ENCODE measurements at regions of chr2 and their contacts with region 1.

Region 1: DNA sequence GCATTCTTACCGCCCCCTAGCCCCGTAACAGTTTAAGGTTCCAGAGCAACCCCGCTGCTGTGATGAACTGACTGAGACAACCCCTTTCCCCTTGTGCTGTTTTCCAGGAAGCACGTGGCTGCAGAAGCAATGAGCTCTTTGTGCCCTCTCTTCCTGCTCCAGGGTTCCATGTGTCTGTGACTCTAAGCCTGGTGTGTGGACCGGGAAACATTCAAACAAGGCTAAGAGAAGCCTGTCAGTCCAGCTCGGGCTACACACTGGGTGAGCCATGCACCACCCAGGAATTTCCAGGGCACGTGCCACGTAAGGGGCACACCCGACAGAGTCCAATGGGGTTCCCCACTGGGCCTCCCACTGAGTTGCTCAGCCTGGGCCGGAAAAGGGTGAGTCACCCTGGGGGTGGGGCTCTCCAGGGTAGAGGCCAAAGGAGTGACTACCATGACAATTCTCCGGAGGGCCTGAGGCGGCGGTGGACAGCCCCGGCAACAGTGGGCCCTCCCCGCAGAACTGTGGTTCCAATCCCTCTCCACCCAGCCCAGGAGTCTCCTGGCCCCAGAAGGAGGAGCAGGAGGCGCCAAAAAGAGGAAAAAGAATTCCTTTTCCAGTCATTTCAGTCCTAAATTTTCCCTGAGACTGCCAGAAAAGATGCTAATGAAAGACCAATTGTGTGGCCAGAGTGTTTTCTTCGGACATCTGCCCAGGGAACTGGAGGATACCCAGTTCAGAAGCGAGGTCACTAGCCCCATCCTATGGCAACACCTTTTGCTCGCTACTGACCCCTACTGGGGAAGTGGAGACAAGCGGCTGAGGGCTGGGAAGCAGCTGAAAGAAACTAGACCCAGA is 157.8 kb upstream of the SLC1A4 start:
- DNase-seq: peak in 1 of 2 experiments; percentile 94
- H3K4me3 ChIP-seq: no peak overlapping the region
- H3K27ac ChIP-seq: no peak overlapping the region
- H3K4me1 ChIP-seq: peaks cover 0 to 5% (median 3%) of the 10 kb centered on the region in 4 experiments; a peak in 3 of 7 replicates
- H3K27me3 ChIP-seq: no peaks in the 10 kb centered on the region
- CTCF ChIP-seq: peak; percentile 83 to 98 (median 92)
- EP300 ChIP-seq: no peak
- POLR2A ChIP-seq: no peak
- RAD21 ChIP-seq: peak; percentile 63 to 72

Region 2: GRCh38 chr2:64727013-64727767 is 104.2 kb before region 1 on chr2:
- CTCF ChIA-PET with region 1: interaction called, 12 read pairs
- POLR2A ChIA-PET with region 1: no interaction called
- DNase-seq: no peak
- H3K4me3 ChIP-seq: no peak overlapping the region
- H3K27ac ChIP-seq: no peak overlapping the region
- H3K4me1 ChIP-seq: peaks cover 0 to 8% (median 2%) of the 10 kb centered on the region in 4 experiments; a peak in 4 of 7 replicates
- H3K27me3 ChIP-seq: no peaks in the 10 kb centered on the region
- CTCF ChIP-seq: no peak
- EP300 ChIP-seq: no peak
- POLR2A ChIP-seq: no peak
- RAD21 ChIP-seq: no peak

Region 3: GRCh38 chr2:64793701-64794100 is 37.7 kb before region 1 on chr2:
- CTCF ChIA-PET with region 1: interaction called, 12 read pairs
- POLR2A ChIA-PET with region 1: interaction called, 3 read pairs
- DNase-seq: no peak
- H3K4me3 ChIP-seq: no peak overlapping the region
- H3K27ac ChIP-seq: no peak overlapping the region
- H3K4me1 ChIP-seq: peaks cover 0 to 8% (median 0%) of the 10 kb centered on the region in 4 experiments; a peak in 1 of 7 replicates
- H3K27me3 ChIP-seq: no peaks in the 10 kb centered on the region; a peak in 2 of 7 replicates
- CTCF ChIP-seq: no peak
- EP300 ChIP-seq: no peak
- POLR2A ChIP-seq: no peak
- RAD21 ChIP-seq: no peak

Region 4: DNA sequence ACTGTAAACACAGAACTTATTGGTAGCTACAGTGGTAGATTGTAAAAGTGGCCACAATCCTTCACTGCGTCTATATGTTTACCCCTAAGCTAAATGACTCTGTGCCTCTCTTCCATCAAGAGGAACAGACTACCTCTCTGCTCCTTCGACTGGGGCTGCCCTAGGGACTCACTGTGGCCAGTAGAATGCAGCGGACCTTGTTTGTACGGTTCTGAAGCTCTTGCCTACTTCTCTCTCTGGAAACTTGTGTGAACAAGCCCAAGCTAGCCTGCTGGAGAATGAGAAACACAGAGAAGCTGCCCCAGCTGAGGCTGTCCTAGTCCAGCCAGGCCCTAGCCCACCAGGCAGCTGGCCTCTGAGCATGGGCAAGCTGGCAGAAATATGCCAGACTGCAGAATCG is 17.0 kb after region 1 on chr2:
- CTCF ChIA-PET with region 1: interaction called, 25 read pairs
- POLR2A ChIA-PET with region 1: no interaction called
- DNase-seq: no peak
- H3K4me3 ChIP-seq: no peak overlapping the region
- H3K27ac ChIP-seq: no peak overlapping the region
- H3K4me1 ChIP-seq: peaks cover 0 to 4% (median 1%) of the 10 kb centered on the region in 4 experiments; a peak in 1 of 7 replicates
- H3K27me3 ChIP-seq: peaks cover 0 to 2% (median 0%) of the 10 kb centered on the region in 4 experiments; a peak in 1 of 7 replicates
- CTCF ChIP-seq: no peak
- EP300 ChIP-seq: no peak
- POLR2A ChIP-seq: no peak
- RAD21 ChIP-seq: no peak

Region 5: GRCh38 chr2:64865073-64865830 is 33.9 kb after region 1 on chr2:
- CTCF ChIA-PET with region 1: interaction called, 14 read pairs
- POLR2A ChIA-PET with region 1: interaction called, 4 read pairs
- DNase-seq: peak in 1 of 2 experiments; percentile 78
- H3K4me3 ChIP-seq: peak overlapping the region; percentile 39 to 80 (median 54)
- H3K27ac ChIP-seq: no peak overlapping the region
- H3K4me1 ChIP-seq: peaks cover 0 to 7% (median 6%) of the 10 kb centered on the region in 4 experiments
- H3K27me3 ChIP-seq: peaks cover 3 to 37% (median 32%) of the 10 kb centered on the region in 4 experiments
- CTCF ChIP-seq: peak; percentile 67 to 76 (median 68)
- EP300 ChIP-seq: no peak
- POLR2A ChIP-seq: no peak
- RAD21 ChIP-seq: peak; percentile 45 to 81; a peak in 3 of 4 replicates